MCF 10A (cell line): ENCODE measurements at regions of chr12 and their contacts with region 1.

Region 1: GRCh38 chr12:69639400-69640016 is 28.8 kb upstream of the LRRC10 start:
- DNase-seq: peak; percentile 72
- H3K4me3 Mint-ChIP-seq: no peak overlapping the region
- H3K27ac Mint-ChIP-seq: no peak overlapping the region
- H3K4me1 Mint-ChIP-seq: no peaks in the 10 kb centered on the region
- H3K27me3 Mint-ChIP-seq: no peaks in the 10 kb centered on the region
- CTCF ChIP-seq: peak; percentile 62

Region 2: DNA sequence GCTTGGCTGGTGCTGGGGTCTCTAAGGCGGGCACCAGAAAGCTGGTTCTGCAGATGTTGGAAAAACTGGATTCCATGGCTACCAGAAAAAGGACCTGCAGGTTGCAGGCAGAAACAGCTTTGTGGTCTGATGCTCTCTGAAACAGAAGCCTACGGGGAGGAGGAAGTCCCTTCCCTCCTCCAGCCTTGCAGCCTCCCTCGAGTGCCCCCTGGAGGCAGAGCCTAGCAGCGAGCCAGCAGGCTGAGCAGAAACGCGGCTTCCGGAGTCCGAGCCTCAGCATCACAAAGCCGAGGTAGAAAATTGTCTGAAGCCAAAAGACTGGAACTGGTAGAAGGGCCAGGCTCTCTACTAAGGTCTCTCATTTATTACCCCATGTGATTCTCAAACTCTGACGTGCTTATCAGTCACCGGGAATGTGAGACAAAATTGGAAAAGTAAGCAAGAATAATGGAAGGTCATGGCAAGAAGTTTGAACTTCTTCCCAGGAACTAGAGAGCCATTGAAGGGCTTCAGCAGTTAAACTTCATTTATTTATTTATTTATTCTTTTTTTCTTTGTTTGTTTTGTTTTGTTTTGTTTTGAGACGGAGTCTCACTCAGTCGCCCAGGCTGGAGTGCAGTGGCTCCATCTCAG is 482.4 kb before region 1 on chr12:
- CTCF ChIA-PET with region 1: no interaction called
- POLR2A ChIA-PET with region 1: no interaction called
- intact Hi-C with region 1: loop called (anchors 10 kb)
- DNase-seq: peak; percentile 71
- H3K4me3 Mint-ChIP-seq: no peak overlapping the region
- H3K27ac Mint-ChIP-seq: no peak overlapping the region
- H3K4me1 Mint-ChIP-seq: peaks cover 11% of the 10 kb centered on the region
- H3K27me3 Mint-ChIP-seq: no peaks in the 10 kb centered on the region
- CTCF ChIP-seq: peak; percentile 63

Region 3: DNA sequence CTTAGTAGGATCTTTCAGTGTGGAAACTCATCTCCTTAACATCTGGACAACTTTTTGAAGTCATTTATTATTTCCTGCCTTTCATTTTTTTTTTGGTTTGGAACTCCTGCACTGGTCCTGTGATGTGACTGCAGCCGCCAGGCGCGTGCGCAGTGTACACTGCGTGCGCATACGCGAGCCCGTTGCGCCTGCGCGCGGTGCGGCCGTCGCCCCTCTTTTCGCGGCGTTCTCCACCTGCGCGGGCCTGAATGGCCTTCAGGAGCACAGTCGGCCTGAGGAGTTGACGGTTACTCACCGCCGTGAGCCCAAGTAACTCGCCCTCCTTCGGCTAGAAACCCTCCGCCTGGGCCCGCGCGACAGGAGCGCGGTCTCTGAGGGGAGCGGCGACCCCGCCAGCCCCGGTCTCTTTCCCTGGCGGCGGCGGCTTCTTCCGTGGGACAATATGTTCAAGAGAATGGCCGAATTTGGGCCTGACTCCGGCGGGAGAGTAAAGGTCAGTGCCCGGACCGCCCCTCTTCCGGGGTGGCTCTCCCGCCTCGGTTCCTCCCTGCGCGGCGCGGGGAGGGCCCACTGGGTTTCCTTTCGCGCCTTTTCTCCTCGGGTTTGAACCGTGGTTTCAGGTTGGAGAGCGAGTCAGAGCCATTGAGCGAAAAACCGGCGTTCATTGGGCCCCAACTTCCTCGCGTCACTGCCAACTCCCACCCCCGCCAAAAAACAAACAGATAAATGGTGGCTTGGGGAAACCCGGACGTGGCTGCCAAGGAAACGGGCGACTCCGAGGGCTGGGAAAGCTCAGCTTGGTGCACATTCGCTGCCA is 279.8 kb before region 1 on chr12 and contains the start of gene YEATS4:
- CTCF ChIA-PET with region 1: interaction called, 7 read pairs
- POLR2A ChIA-PET with region 1: no interaction called
- intact Hi-C with region 1: loop called (anchors 10 kb)
- DNase-seq: peak; percentile 95
- H3K4me3 Mint-ChIP-seq: peak within 1 kb of the TSS; percentile 83
- H3K27ac Mint-ChIP-seq: peak within 1 kb of the TSS; percentile 84
- H3K4me1 Mint-ChIP-seq: peaks cover 15% of the 10 kb centered on the region
- H3K27me3 Mint-ChIP-seq: peaks cover 6% of the 10 kb centered on the region
- CTCF ChIP-seq: no peak
- total RNA-seq, gene YEATS4: 26.1 and 30.9 TPM in 2 replicates

Region 4: GRCh38 chr12:69388371-69388770 is 251.1 kb before region 1 on chr12:
- CTCF ChIA-PET with region 1: interaction called, 6 read pairs
- POLR2A ChIA-PET with region 1: no interaction called
- intact Hi-C with region 1: loop called (anchors 1 kb)
- DNase-seq: peak; percentile 42
- H3K4me3 Mint-ChIP-seq: no peak overlapping the region
- H3K27ac Mint-ChIP-seq: no peak overlapping the region
- H3K4me1 Mint-ChIP-seq: peaks cover 6% of the 10 kb centered on the region
- H3K27me3 Mint-ChIP-seq: no peaks in the 10 kb centered on the region
- CTCF ChIP-seq: peak; percentile 53

Region 5: DNA sequence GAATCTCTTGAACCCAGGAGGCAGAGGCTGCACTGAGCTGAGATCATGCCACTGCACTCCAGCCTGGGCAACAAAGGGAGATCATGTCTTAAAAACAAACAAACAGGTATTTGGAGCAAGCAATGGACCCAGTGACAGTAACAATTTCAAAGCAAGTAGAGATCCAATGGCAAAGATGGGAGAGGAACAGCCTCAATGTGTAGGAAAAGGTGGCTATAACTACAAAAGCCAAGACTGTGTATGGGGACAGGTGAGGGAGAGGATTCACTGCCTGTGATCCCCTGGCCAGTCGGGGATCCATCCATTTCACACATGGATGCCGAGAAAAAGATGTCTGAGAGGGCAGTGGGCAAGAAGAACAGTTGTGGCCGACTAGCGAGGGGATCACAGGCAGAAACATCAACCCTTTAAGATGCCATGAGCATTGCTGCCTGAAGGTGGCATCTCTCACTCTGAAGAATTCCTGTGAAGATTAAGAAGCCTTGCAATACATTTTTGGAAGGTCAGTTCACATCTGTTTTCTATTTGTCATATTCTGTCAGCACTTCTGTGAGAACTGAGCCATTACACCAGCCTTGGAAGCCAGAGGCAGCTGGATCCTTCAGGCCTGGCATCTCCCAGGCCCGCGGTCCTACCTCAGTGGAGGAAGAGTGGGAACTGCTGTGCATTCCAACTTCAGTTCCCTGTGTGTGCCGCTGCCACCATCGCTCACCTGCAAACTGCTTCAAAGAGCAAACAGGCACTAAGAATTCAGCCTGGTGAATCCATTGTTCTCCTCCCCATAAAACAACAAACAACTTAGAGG is 223.8 kb before region 1 on chr12:
- CTCF ChIA-PET with region 1: interaction called, 4 read pairs
- POLR2A ChIA-PET with region 1: no interaction called
- intact Hi-C with region 1: loop called (anchors 1 kb)
- DNase-seq: peak; percentile 65
- H3K4me3 Mint-ChIP-seq: no peak overlapping the region
- H3K27ac Mint-ChIP-seq: no peak overlapping the region
- H3K4me1 Mint-ChIP-seq: peaks cover 9% of the 10 kb centered on the region
- H3K27me3 Mint-ChIP-seq: no peaks in the 10 kb centered on the region
- CTCF ChIP-seq: peak; percentile 74

Region 6: GRCh38 chr12:69623970-69624369 is 15.5 kb before region 1 on chr12:
- CTCF ChIA-PET with region 1: interaction called, 19 read pairs
- POLR2A ChIA-PET with region 1: interaction called, 6 read pairs
- intact Hi-C with region 1: no loop called
- DNase-seq: no peak
- H3K4me3 Mint-ChIP-seq: no peak overlapping the region
- H3K27ac Mint-ChIP-seq: no peak overlapping the region
- H3K4me1 Mint-ChIP-seq: no peaks in the 10 kb centered on the region
- H3K27me3 Mint-ChIP-seq: peaks cover 11% of the 10 kb centered on the region
- CTCF ChIP-seq: no peak

Region 7: DNA sequence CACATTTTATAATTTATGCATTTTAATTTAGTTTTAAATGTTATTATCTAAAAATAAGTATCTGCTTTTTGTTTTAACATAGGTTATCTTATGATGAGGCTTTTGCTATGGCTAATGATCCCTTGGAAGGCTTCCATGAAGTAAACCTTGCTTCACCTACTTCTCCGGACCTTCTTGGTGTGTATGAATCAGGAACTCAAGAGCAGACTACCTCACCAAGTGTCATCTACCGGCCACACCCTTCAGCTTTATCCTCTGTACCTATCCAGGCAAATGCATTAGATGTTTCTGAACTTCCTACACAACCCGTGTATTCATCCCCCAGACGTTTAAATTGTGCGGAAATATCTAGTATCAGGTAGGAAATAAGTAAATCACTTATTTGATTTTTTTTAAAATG is 115.8 kb after region 1 on chr12:
- CTCF ChIA-PET with region 1: no interaction called
- POLR2A ChIA-PET with region 1: no interaction called
- intact Hi-C with region 1: no loop called
- DNase-seq: no peak
- H3K4me3 Mint-ChIP-seq: no peak overlapping the region
- H3K27ac Mint-ChIP-seq: no peak overlapping the region
- H3K4me1 Mint-ChIP-seq: no peaks in the 10 kb centered on the region
- H3K27me3 Mint-ChIP-seq: no peaks in the 10 kb centered on the region
- CTCF ChIP-seq: no peak

Region 8: DNA sequence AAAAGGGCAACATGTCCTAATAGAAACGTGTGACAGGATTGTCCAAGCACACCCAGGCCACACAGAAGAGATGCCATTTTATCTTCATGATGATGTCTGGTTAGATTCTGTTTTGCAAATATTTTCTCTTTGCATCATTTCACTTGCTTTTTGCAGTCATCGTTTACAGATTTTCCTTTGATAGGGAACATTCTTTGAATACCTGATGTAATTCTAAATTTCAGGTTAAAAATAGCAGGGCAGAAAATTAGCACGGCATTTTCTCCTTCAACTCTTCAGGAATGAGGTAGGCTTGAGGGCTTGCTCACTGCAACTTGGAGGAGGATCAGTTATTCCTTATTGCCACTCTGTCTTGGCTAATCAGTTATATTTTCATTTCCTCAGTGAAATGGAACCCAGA is 877.7 kb after region 1 on chr12:
- CTCF ChIA-PET with region 1: no interaction called
- POLR2A ChIA-PET with region 1: no interaction called
- intact Hi-C with region 1: no loop called
- DNase-seq: no peak
- H3K4me3 Mint-ChIP-seq: no peak overlapping the region
- H3K27ac Mint-ChIP-seq: no peak overlapping the region
- H3K4me1 Mint-ChIP-seq: peaks cover 10% of the 10 kb centered on the region
- H3K27me3 Mint-ChIP-seq: no peaks in the 10 kb centered on the region
- CTCF ChIP-seq: no peak